ENCODE measurements at regions of chr1 and their contacts with region 1.

Region 1: GRCh38 chr1:212035123-212035834 is at the starts of genes DTL and INTS7:
- DNase-seq: peak; percentile 98 to 99
- ATAC-seq: peak; percentile 95 to 98
- H3K4me3 ChIP-seq: peak within 1 kb of the TSS; percentile 68 to 78 (median 74)
- H3K27ac ChIP-seq: peak within 1 kb of the TSS; percentile 80 to 91 (median 89)
- H3K4me1 ChIP-seq: peaks cover 15 to 20% of the 10 kb centered on the region in 2 donors
- H3K27me3 ChIP-seq: no peaks in the 10 kb centered on the region
- CTCF ChIP-seq: peak; percentile 78 to 97 (median 91)
- POLR2A ChIP-seq: no peak
- total RNA-seq, gene DTL: 0.52 to 1.8 TPM in 2 of 4 donors, not detected in the others
- total RNA-seq, gene INTS7: 4.0 to 8.0 (median 6.6) TPM

Region 2: DNA sequence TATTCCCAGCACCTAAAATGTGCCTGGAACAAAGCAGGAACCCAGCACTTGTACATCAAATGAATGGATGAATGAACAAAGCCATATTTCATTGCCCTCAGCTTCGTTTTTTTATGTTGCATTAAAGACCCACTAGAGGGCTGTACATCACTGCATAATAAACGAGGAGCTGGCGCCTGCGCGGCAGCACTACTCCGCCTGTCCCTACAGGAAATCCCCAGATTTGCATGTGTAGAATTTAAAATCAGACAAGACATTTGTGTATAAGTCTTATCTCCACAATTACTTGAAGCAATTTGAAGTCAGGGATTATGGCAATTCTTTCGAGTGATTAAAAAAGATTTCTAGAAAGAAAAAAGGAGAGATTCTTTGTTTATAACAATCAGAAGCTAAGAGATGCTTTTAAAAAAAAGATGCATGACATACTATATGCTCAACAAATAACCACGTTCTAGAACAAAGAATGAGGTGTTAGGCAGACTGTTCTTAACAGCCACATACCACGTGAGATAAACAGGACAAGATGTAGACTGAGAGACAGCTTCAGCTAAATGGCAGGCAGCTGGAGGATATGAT is 354.4 kb before region 1 on chr1:
- in situ Hi-C with region 1: loop called in 1 of 4 experiments (anchors 25 kb)
- intact Hi-C with region 1: no loop called
- DNase-seq: peak; percentile 15 to 44
- ATAC-seq: peak; percentile 75 to 84
- H3K4me3 ChIP-seq: no peak overlapping the region
- H3K27ac ChIP-seq: no peak overlapping the region
- H3K4me1 ChIP-seq: peaks cover under 1 to 2% of the 10 kb centered on the region in 2 donors
- H3K27me3 ChIP-seq: no peaks in the 10 kb centered on the region
- CTCF ChIP-seq: peak; percentile 38 to 75 (median 62)
- POLR2A ChIP-seq: no peak

Region 3: GRCh38 chr1:212012034-212012740 is 23.1 kb before region 1 on chr1:
- in situ Hi-C with region 1: no loop called
- intact Hi-C with region 1: loop called (anchors 2 kb)
- DNase-seq: peak; percentile 17 to 55
- ATAC-seq: peak; percentile 63 to 83
- H3K4me3 ChIP-seq: no peak overlapping the region
- H3K27ac ChIP-seq: no peak overlapping the region
- H3K4me1 ChIP-seq: no peaks in the 10 kb centered on the region
- H3K27me3 ChIP-seq: no peaks in the 10 kb centered on the region
- CTCF ChIP-seq: peak; percentile 69 to 92 (median 78)
- POLR2A ChIP-seq: no peak

Region 4: DNA sequence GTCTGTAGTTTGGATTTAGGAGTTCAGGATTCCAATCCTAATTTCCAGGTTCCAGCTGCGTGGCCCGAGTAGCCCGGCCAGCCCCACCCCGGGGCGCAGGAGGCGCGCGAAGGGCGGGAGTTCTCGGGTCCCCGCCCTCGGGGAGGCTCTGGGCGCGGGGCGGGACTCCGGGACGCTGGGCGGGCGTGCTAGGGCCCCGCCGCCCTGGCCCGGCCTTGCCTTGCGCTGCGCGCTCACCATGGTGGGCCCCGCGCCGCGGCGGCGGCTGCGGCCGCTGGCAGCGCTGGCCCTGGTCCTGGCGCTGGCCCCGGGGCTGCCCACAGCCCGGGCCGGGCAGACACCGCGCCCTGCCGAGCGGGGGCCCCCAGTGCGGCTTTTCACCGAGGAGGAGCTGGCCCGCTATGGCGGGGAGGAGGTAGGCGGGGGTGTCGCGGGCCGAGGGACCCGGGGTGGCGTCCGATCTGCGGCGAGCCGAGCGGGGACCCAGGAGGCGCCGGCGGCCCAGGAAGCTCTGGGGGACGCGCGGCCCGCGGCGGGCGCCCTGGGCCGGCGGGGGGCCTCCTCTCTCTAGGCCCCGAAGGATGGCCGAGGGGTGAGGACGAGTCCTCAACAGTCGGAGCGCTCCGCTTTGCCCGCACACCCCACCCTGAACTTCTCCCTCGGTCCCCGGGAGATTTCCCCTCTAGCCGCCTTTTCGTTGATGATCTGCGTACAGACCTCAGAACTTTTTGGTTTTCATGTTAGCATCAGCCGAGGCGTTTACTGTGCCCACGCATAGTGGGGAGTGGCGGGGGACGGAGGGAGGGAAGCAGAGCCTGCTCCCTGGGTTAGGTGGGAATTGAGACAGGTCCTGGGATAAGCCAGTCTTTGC is 397.7 kb after region 1 on chr1 and contains the start of gene NENF:
- in situ Hi-C with region 1: no loop called
- intact Hi-C with region 1: loop called (anchors 10 kb)
- DNase-seq: peak; percentile 47 to 71
- ATAC-seq: peak; percentile 90 to 93
- H3K4me3 ChIP-seq: peak within 1 kb of the TSS; percentile 66 to 76 (median 68)
- H3K27ac ChIP-seq: peak within 1 kb of the TSS; percentile 73 to 83 (median 78)
- H3K4me1 ChIP-seq: peaks cover 7 to 13% of the 10 kb centered on the region in 2 donors
- H3K27me3 ChIP-seq: no peaks in the 10 kb centered on the region
- CTCF ChIP-seq: no peak
- POLR2A ChIP-seq: peak; percentile 81 to 83
- total RNA-seq, gene NENF: 74.8 to 149 (median 112) TPM